GM10248 (cell line): ENCODE measurements at regions of chrX and their contacts with region 1.

Region 1: GRCh38 chrX:10098270-10098713 is 58.5 kb upstream of the CLCN4 start:
- DNase-seq: peak; percentile 60
- CTCF ChIP-seq: no peak

Region 2: DNA sequence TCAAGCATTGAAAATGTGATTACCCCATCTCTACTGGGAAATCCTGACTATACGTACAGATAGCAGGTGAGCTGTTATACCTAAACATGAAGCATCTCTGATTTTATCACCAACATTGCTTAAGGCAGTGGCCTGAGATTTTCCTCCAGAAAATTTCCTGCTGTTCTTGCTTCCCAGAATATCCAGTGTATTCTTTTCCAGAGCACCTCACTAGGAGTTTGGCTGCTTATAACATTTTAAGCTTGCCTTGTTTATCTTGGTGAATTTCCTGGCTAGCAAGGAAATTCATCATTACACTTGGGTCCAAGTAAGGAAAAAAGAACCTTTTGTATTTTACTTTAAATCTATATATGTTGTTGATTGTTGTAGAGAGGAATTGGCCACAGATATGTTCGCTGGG is 14.5 kb before region 1 on chrX:
- CTCF ChIA-PET with region 1: interaction called, 40 read pairs
- POLR2A ChIA-PET with region 1: no interaction called
- DNase-seq: no peak
- CTCF ChIP-seq: no peak

Region 3: GRCh38 chrX:12013220-12013619 is 1914.9 kb after region 1 on chrX:
- CTCF ChIA-PET with region 1: no interaction called
- POLR2A ChIA-PET with region 1: no interaction called
- DNase-seq: no peak
- CTCF ChIP-seq: no peak